Ovary (tissue), 10 donors: ENCODE measurements at regions of chr7 and their contacts with region 1.

Region 1: DNA sequence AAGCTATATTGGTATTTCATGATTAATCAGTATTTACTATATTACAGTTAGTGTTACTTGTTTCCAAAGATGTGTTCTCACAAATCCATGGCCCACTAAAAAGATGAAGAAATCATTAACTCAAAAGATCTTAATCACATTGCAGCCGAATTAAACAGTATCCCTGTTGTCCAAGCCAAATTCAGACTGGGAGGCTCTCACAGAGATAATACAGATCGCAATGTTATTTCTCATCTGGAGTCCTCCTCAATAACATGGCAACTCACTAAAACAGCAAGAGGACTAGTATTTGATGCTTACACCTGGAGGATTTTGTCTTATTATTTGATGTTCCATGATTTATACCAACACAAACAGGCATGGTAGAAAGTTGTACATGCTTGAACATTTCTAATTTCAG is 23.4 kb downstream of the CYP51A1 start:
- DNase-seq: no peak
- H3K4me3 ChIP-seq: no peak overlapping the region
- H3K27ac ChIP-seq: no peak overlapping the region
- H3K4me1 ChIP-seq: no peaks in the 10 kb centered on the region
- H3K27me3 ChIP-seq: no peaks in the 10 kb centered on the region
- CTCF ChIP-seq: no peak
- EP300 ChIP-seq: no peak
- POLR2A ChIP-seq: no peak

Region 2: DNA sequence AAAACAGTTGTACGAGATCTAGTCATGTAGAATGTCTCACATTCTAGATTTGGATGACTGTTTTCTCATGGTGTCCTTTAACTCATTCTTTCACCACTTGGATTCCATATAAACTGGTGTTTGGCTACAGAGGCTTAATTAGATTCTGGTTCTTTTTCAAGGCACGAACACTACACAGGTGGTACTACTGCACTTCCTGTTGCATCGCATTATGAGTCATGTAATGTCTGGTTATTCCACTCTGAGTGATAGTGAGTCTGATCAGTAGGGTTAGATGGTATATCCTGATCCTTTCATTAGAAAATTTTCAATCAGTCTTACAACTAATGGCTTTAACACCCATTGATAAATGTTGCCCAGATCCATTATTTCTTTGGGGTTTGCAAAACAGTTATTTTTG is 181.4 kb before region 1 on chr7:
- intact Hi-C with region 1: loop called in 1 of 4 experiments (anchors 5 kb)
- DNase-seq: no peak
- H3K4me3 ChIP-seq: no peak overlapping the region
- H3K27ac ChIP-seq: no peak overlapping the region
- H3K4me1 ChIP-seq: no peaks in the 10 kb centered on the region
- H3K27me3 ChIP-seq: no peaks in the 10 kb centered on the region
- CTCF ChIP-seq: no peak
- EP300 ChIP-seq: no peak
- POLR2A ChIP-seq: no peak

Region 3: GRCh38 chr7:91995391-91996105 is 115.3 kb before region 1 on chr7:
- intact Hi-C with region 1: no loop called
- DNase-seq: no peak
- H3K4me3 ChIP-seq: no peak overlapping the region
- H3K27ac ChIP-seq: no peak overlapping the region
- H3K4me1 ChIP-seq: no peaks in the 10 kb centered on the region
- H3K27me3 ChIP-seq: no peaks in the 10 kb centered on the region
- CTCF ChIP-seq: no peak
- EP300 ChIP-seq: no peak
- POLR2A ChIP-seq: no peak